ENCODE measurements at regions of chr4 and their contacts with region 1.

Region 1: DNA sequence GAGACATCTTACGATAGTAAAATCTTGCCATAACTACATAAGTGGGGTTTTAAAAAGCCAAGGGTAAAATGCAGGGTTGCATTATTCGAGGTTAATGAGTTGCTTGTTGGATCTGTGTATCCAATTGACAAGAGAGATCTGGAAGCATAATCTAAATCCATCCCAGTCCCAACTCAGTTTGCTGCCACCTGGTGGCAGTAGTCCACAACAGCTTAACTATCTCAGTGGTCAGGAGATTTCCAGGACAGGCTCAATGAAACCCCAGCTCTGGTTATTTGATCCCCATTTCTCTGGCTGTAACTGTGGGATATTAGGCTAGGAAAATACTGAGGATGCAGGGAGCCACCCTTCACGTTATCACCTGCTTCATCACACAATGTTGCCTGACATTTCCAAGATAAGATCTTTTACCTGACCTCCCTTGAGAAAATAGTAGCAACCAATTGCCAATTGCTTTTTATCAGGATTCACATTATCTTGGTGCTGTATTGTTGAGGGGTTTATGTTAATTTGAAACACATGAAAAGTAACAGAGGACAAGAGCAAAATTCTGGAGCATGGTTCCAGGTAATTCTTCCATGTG is 88.2 kb upstream of the TNIP3 start:
- DNase-seq: no peak
- H3K4me3 ChIP-seq: no peak overlapping the region
- H3K27me3 ChIP-seq: no peaks in the 10 kb centered on the region
- CTCF ChIP-seq: peak; percentile 81

Region 2: DNA sequence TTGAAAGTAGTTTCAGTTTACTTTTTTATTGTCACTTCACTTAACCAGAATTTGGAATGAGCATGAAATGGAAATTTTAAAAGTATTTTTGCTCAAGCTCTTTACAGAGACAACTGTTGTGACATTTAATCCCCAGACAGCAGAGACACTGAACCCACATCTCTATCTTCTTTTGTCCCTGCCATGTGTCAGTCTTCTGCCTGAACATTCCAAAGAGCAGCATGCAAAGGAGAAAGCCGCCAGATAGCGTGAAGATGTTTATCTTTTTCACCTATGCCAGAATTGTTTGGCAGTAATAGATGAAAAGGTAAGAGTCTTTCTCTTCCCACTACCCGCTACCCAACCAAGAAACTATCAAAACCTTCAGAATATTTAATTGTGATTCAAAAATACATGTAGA is 226.8 kb before region 1 on chr4:
- CTCF ChIA-PET with region 1: no interaction called
- POLR2A ChIA-PET with region 1: no interaction called
- DNase-seq: no peak
- H3K4me3 ChIP-seq: no peak overlapping the region
- H3K27me3 ChIP-seq: no peaks in the 10 kb centered on the region
- CTCF ChIP-seq: no peak

Region 3: DNA sequence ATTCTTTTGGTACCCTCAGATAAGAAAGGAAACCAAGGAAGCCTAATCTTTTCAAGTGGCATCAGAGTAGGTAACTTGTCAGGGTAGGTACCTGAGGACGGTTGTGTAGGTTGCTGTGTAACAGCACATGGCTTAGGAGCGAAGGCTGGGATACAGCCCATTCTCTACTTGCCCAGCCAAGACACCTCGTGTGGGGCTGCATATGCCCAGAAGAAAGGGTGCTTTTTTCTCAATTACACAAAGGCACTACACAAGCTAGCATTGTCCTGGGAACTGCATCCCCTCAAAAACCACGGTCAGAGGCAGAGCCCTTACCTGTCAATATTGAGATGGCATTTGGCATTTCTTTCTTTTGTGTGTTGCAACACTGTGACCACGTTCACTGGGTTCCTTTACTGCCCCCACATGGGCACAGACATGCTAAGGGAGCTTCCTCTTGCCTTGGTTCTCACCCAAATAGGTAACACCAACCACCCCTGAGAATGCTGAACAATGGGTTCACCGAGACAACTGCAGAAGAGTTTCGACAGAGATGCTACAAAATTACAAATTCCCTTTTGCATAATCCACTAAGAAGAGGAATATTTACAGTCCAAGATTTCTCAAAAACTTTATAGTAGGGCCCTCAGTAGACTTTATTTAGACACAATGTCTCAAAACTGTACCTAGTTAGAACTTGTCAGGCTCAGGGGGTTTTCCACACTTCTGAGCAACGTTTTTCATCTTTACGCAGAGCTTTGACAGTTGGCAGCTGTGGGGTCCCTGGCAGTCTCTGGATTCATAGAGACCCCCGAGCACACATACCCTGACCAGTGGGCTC is 52.4 kb before region 1 on chr4:
- CTCF ChIA-PET with region 1: interaction called, 21 read pairs
- POLR2A ChIA-PET with region 1: no interaction called
- DNase-seq: no peak
- H3K4me3 ChIP-seq: no peak overlapping the region
- H3K27me3 ChIP-seq: no peaks in the 10 kb centered on the region
- CTCF ChIP-seq: no peak